Activated T-helper 2 cell treated with anti-CD3 and anti-CD28 coated beads, Interferon-gamma antibody, Interleukin-2, Interleukin-4, amounts not matched to agents 10 μg/mL and 5 μg/mL and 100 μg/mL, durations not matched to agents 14 hours and 24 hours and 36 hours (primary cell): ENCODE measurements at regions of chr3 and their contacts with region 1.

Region 1: GRCh38 chr3:187974871-187975271 is 179.1 kb upstream of the LPP start:
- DNase-seq: peak; percentile 20
- H3K4me3 Mint-ChIP-seq: peak overlapping the region; percentile 72
- H3K27ac Mint-ChIP-seq: peak overlapping the region; percentile 93
- H3K4me1 Mint-ChIP-seq: peaks cover 68% of the 10 kb centered on the region
- H3K27me3 Mint-ChIP-seq: no peaks in the 10 kb centered on the region

Region 2: DNA sequence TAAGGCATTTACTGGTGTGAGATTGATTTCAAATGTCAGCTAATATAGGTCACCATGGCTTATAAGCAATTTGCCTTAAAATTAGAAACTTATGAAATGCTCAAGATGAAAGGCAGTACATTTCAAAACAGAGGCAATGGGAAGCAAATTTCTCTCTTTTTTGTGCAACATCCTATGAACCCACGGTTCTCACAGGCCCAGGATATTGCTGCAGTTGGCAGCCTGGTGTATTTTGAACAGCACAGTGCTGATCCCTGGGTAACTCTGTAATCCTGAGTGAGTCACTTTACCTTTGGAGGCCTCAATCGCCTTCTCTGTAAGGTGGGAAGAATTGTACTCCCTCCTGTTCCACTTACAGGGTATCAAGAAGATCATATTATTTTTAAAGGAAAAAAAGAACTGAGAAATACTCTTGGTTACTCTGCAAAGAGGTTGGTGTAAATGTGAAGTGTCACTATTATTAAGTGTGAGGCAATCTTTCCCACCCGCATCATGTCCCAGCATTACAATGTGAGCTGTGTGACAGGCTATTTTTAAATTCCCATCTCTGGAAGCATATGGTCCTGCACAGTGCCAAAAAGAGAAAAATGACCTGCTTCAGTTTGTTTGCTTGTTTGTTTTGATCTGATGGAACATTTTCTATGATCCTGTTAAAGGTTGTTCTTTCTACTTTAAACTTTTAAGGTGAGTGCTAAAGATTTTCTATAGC is 11.0 kb before region 1 on chr3:
- intact Hi-C with region 1: loop called (anchors 1 kb)
- DNase-seq: no peak
- H3K4me3 Mint-ChIP-seq: no peak overlapping the region
- H3K27ac Mint-ChIP-seq: peak overlapping the region; percentile 9
- H3K4me1 Mint-ChIP-seq: peaks cover 25% of the 10 kb centered on the region
- H3K27me3 Mint-ChIP-seq: peaks cover 4% of the 10 kb centered on the region

Region 3: GRCh38 chr3:187994221-187995042 is 19.6 kb after region 1 on chr3:
- intact Hi-C with region 1: loop called (anchors 1 kb)
- DNase-seq: no peak
- H3K4me3 Mint-ChIP-seq: peak overlapping the region; percentile 35
- H3K27ac Mint-ChIP-seq: peak overlapping the region; percentile 77
- H3K4me1 Mint-ChIP-seq: peaks cover 70% of the 10 kb centered on the region
- H3K27me3 Mint-ChIP-seq: no peaks in the 10 kb centered on the region

Region 4: DNA sequence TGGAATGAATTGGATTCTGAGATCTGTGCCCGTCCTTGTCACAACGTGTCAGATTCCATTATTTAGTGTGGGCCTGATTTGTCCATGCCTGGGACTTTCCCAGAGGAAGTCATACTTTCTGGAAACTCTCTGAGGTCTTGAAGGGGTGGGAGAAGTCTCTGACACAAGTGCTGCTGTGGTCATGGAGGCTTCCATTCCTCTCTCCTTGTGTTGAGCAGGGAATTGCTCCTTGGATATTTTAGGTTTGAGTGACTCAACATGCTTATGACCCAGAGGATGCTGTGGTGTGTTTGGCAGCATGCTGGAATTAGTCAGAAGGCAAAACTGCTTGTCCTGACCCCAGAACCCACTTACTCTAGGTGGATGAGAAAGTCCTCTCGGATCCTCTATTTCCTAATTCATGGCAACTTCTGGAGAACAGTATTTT is 311.2 kb after region 1 on chr3:
- intact Hi-C with region 1: loop called (anchors 10 kb)
- DNase-seq: no peak
- H3K4me3 Mint-ChIP-seq: no peak overlapping the region
- H3K27ac Mint-ChIP-seq: peak overlapping the region; percentile 5
- H3K4me1 Mint-ChIP-seq: peaks cover 52% of the 10 kb centered on the region
- H3K27me3 Mint-ChIP-seq: no peaks in the 10 kb centered on the region

Region 5: DNA sequence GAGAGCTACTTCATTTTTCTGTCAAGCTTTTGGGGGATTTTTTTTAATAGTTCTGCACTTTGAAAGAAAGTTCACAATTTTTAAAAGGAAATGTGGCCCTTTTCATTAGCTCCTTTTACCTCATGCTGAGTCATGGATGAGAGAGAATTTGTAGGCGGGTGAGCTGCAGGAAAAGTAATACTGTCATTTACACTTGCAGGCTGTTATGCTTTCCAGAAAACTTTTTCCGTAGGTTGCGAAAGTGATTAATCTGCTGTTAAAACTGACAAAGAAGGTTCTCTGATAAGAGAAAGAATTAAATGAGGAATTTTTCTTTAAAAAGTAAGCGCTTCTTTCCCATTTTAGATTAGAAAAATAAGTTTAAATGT is 609.3 kb after region 1 on chr3:
- intact Hi-C with region 1: loop called (anchors 10 kb)
- DNase-seq: no peak
- H3K4me3 Mint-ChIP-seq: peak overlapping the region; percentile 13
- H3K27ac Mint-ChIP-seq: peak overlapping the region; percentile 86
- H3K4me1 Mint-ChIP-seq: peaks cover 30% of the 10 kb centered on the region
- H3K27me3 Mint-ChIP-seq: no peaks in the 10 kb centered on the region

Region 6: DNA sequence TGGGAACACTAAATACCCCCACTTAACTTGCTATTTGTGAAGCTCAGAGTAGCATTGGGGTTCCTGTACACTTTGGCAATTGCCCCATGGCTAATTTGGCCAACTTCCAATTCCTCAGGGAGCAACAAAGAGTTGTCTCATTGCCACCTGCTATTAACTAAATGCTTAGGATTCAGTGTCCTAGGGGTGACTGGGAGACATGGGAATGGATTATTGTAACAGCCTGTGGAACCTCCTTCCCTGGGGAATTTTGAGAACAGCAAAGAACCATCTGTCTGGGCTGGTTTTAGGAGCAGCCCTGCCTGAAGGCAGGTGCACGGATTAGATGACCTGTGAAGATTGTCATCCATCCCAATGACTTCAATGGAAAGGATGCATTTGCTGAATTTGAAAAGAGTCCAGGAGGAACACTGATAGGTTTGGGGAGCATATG is 759.6 kb after region 1 on chr3:
- intact Hi-C with region 1: no loop called
- DNase-seq: no peak
- H3K4me3 Mint-ChIP-seq: no peak overlapping the region
- H3K27ac Mint-ChIP-seq: no peak overlapping the region
- H3K4me1 Mint-ChIP-seq: peaks cover 3% of the 10 kb centered on the region
- H3K27me3 Mint-ChIP-seq: peaks cover 6% of the 10 kb centered on the region

Region 7: GRCh38 chr3:189148081-189148507 is 1173.2 kb after region 1 on chr3:
- intact Hi-C with region 1: loop called (anchors 10 kb)
- DNase-seq: peak; percentile 52
- H3K4me3 Mint-ChIP-seq: no peak overlapping the region
- H3K27ac Mint-ChIP-seq: no peak overlapping the region
- H3K4me1 Mint-ChIP-seq: peaks cover 41% of the 10 kb centered on the region
- H3K27me3 Mint-ChIP-seq: peaks cover 7% of the 10 kb centered on the region